ENCODE measurements at regions of chr9 and their contacts with region 1.

Region 1: DNA sequence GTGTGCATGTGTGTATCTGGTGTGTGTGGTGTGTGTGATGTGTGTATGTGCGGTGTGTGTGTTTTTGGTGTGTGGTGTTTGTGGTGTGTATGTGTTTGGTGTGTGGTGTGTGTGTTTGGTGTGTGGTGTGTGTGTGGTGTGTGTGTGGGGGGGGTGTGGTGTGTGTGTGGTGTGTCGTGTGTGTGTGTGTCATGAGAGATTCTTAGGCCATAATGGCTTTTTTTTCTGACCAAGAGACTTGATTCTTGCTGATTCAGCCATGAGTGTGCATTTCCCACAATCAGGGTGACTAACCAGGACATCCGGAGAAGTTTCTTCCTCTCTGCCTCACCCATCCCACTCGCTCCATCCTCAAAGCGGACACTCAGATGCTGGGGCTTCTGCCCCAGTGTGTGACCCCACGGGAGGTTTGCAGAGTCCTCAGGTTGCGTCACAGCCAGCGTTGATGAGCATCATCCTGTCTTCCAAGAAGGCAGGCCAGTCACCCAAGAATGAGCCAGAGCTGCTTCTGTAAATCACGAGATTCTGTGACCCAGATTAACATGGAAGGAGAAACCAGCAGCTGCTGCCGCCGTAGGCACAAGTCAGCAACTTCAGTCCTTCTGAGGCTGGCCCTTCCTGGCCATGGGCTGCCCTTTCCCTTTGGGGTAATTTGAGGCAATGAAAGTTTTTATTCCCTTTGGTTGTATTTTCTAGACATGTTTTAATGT is 12.5 kb upstream of the CTSL start:
- DNase-seq: peak; percentile 99 to 100 (median 99)
- H3K4me3 ChIP-seq: peak overlapping the region in 2 of 3 experiments; percentile 15 to 23
- H3K4me3 Mint-ChIP-seq: peak overlapping the region in 1 of 2 donors; percentile 78
- H3K27ac ChIP-seq: peak overlapping the region; percentile 56 to 69
- H3K27ac Mint-ChIP-seq: peak overlapping the region; percentile 80 to 94 (median 90)
- H3K4me1 ChIP-seq: peaks cover 26 to 36% of the 10 kb centered on the region in 2 donors
- H3K4me1 Mint-ChIP-seq: peaks cover 52% of the 10 kb centered on the region
- H3K27me3 ChIP-seq: peaks cover 0 to 2% of the 10 kb centered on the region in 2 donors
- H3K27me3 Mint-ChIP-seq: peaks cover 4 to 7% (median 5%) of the 10 kb centered on the region in 3 donors
- CTCF ChIP-seq: no peak

Region 2: DNA sequence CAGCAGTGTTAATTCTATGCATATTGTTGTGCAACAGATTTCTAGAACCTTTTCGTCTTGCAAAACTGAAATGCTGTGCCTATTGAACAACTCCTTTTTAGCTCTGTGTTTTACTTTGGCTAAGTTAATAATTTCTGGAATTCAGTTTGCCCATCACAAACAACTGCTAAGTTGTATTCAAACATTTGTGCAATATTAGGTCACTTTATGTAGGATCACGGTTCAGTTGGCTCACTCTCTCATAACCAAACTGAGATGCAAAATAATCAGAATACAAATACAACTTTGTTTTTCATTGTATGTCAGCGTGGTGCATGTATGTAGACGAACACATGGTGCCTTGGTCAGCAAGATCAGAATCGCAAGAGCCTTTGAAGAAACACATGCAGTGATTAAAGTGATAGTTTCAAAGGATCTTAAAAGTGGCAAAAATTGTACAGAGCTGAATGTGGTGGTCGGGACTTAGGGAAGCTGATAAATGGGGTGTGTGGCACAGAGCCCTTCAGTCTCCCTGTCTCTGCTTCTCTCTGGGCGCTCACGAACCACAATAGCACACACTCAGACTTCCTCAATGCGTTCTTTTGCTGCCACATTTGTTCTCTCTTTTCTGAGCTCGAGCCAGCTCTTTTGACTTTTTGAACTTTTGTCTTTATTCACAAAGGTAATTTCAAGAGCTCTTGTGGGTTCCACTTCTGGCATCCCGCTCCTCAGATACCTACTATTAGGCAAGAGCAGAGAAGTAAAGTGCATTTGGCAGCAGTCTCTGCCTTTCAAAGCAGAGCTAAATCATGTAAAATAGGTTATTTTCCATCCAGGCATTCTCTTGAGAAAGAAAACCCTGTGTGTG is 99.9 kb before region 1 on chr9:
- intact Hi-C with region 1: loop called (anchors 5 to 10 kb)
- DNase-seq: peak; percentile 54 to 60 (median 59)
- H3K4me3 ChIP-seq: peak overlapping the region in 1 of 3 experiments; percentile 37
- H3K4me3 Mint-ChIP-seq: peak overlapping the region in 1 of 2 donors; percentile 69
- H3K27ac ChIP-seq: peak overlapping the region; percentile 57 to 93
- H3K27ac Mint-ChIP-seq: peak overlapping the region; percentile 90 to 97 (median 93)
- H3K4me1 ChIP-seq: peaks cover 57 to 82% of the 10 kb centered on the region in 2 donors
- H3K4me1 Mint-ChIP-seq: peaks cover 88% of the 10 kb centered on the region
- H3K27me3 ChIP-seq: no peaks in the 10 kb centered on the region
- H3K27me3 Mint-ChIP-seq: peaks cover 0 to 3% (median 1%) of the 10 kb centered on the region in 3 donors
- CTCF ChIP-seq: no peak

Measured in CD14-positive monocyte (primary cell).